Endothelial cell of umbilical vein (primary cell): ENCODE measurements at regions of chr1 and their contacts with region 1.

Region 1: GRCh38 chr1:158355773-158356285 is 2.1 kb downstream of the CD1E start:
- DNase-seq: no peak
- H3K4me3 ChIP-seq: no peak overlapping the region
- H3K27ac ChIP-seq: no peak overlapping the region
- H3K4me1 ChIP-seq: no peaks in the 10 kb centered on the region
- H3K27me3 ChIP-seq: no peaks in the 10 kb centered on the region
- CTCF ChIP-seq: no peak
- POLR2A ChIP-seq: no peak

Region 2: DNA sequence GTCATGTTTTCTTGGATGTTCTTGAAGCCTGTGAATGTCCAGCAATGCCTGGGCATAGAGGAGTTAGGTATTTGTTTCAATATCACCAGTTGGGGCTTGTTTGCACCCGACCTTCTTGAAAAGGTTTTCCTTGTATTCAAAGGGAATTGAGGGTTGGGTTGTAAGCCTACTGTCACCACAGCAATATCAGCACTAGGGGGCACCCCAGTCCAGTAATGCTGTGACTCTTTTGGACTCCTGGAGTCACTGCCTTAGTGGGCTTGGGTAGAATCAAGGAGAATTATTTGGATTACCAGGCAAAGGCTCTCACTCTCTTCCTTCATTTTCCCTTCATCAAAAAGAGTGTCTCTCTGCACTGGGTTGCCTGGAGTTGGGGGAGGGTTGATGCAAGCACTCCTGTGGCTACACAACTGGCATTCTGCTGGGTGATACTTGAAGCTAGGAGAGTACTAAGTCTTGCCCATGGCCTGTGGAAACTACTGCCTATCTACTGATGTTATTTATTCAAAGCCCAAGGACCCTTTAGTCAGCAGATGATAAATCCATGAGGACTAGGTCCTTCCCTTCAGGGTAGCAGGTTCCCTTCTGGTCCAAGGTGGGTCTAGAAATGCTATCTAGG is 150.6 kb after region 1 on chr1:
- CTCF ChIA-PET with region 1: no interaction called
- POLR2A ChIA-PET with region 1: no interaction called
- dilution Hi-C with region 1: no loop called
- intact Hi-C with region 1: loop called (anchors 2 kb)
- DNase-seq: peak; percentile 43
- H3K4me3 ChIP-seq: no peak overlapping the region
- H3K27ac ChIP-seq: no peak overlapping the region
- H3K4me1 ChIP-seq: no peaks in the 10 kb centered on the region
- H3K27me3 ChIP-seq: peaks cover 0 to 1% of the 10 kb centered on the region in 2 experiments
- CTCF ChIP-seq: peak; percentile 25 to 60
- POLR2A ChIP-seq: no peak